Activated naive CD4-positive, alpha-beta T cell treated with anti-CD3 and anti-CD28 coated beads, Interleukin-2, amount 10 ng/mL, durations not matched to agents 7 days and 5 days (primary cell): ENCODE measurements at regions of chr3 and their contacts with region 1.

Region 1: DNA sequence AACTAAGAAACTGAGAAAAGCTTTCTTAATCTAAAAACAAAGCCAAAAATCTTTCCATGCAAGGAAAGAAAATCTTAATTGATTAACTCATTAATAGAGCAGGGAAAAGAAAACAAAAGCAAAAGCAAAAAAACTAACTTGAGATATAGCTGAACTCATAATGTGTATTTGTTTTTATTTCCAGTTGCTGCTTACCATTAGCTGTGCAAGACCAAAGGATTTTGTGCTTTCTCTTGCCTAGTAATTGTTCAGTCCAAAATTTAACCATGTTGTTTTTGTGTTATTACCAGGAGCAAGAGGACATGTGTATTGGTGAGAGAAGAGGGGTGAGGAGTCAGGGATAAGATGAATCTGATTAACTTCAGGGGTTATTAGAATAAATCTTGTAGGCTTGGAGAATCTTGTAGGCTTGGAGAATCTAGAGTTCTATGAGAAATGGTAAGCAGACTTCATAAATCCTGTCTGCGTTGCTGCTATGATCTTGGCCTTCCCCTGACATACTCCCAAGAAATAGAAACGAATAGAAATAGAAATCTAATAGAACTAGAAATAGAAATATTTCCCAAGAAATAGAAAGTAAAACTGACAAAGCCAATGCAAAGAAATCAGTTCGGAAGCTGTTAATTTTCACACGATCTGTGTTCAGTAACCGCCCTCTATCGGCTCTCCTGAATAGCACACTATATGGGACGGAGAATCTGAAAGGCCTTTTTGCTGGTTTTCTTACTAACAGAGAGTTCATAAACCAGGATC is 72.6 kb upstream of the TNFSF10 start:
- DNase-seq: peak; percentile 51
- H3K4me3 Mint-ChIP-seq: peak overlapping the region; percentile 69
- H3K27ac Mint-ChIP-seq: peak overlapping the region; percentile 51
- H3K4me1 Mint-ChIP-seq: peaks cover 56% of the 10 kb centered on the region
- H3K27me3 Mint-ChIP-seq: peaks cover 4% of the 10 kb centered on the region

Region 2: GRCh38 chr3:172305552-172305951 is 290.3 kb before region 1 on chr3:
- CTCF ChIA-PET with region 1: no interaction called
- DNase-seq: no peak
- H3K4me3 Mint-ChIP-seq: no peak overlapping the region
- H3K27ac Mint-ChIP-seq: no peak overlapping the region
- H3K4me1 Mint-ChIP-seq: no peaks in the 10 kb centered on the region
- H3K27me3 Mint-ChIP-seq: no peaks in the 10 kb centered on the region

Region 3: DNA sequence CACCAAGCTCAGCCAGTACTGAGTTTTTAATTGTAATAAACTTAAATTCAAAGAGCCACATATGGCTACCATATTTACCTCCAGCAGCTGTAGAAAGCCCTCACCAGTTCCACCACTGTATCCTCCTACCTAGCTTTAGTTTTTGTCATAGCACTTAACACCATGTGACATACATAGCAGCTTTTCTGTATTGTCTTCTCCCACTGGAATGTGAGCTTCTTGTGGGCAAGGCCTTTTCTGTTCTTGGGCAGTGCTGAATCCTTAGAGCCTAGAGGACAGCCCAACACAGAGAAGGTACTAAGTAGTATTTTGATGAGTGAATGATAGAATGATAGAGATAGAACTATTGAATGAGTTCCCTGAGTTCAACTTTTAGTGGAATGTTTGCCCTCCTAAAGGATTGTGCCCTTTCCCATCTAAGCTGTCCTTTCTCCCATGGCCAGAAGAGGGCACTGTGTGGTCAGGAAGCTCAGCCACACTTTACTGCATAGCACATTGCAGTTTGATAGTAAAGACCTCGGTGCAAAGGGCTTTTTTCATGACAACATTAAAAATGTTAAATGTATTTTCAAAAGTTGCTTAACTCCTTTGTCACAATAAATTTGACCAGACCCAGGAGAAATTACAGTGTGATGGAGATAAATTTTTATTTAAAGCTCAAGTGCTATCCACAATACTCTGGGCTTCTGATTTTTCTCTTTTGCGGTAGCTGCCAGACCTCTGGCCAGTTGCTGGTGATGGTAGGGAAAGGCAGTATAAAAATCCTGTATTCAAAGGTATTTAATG is 263.4 kb before region 1 on chr3:
- CTCF ChIA-PET with region 1: interaction called, 20 read pairs
- DNase-seq: peak; percentile 65
- H3K4me3 Mint-ChIP-seq: no peak overlapping the region
- H3K27ac Mint-ChIP-seq: peak overlapping the region; percentile 58
- H3K4me1 Mint-ChIP-seq: peaks cover 4% of the 10 kb centered on the region
- H3K27me3 Mint-ChIP-seq: no peaks in the 10 kb centered on the region

Region 4: DNA sequence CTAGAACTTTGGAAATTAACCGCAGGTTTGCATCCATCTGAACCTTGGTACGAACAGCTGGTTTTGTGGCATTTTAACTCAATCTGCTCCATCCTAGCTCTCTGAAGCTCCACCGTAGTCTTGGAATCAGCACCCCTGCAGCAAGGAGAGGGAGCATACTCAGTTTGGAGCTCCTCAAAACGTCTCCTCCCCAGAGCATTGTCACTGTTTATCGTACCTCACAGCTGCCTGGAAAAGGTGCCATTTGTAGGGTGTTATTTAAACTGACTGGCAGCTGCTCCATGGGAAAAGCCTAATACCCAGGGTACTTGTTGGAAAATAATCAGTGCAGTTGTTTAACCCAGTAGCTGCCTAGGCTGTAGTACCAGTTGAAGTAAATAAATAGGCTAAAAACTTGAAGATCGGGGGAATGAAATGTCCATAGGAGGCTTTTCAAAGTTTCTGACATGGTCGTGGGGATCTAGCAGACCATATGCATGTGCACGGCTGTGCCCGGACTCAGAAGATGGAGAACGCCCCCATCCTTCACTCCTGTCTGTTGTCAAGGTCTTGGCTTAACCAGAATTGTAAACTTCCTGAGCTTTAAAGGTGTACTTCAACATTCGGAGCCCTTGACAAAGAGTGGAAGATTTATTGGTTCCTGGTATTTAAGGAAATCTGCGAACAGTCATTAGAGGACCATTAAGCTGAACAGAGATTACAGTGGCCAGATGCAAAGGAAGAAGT is 191.4 kb before region 1 on chr3:
- CTCF ChIA-PET with region 1: no interaction called
- DNase-seq: no peak
- H3K4me3 Mint-ChIP-seq: no peak overlapping the region
- H3K27ac Mint-ChIP-seq: no peak overlapping the region
- H3K4me1 Mint-ChIP-seq: no peaks in the 10 kb centered on the region
- H3K27me3 Mint-ChIP-seq: peaks cover 7% of the 10 kb centered on the region

Region 5: GRCh38 chr3:172454180-172454579 is 141.6 kb before region 1 on chr3:
- CTCF ChIA-PET with region 1: no interaction called
- DNase-seq: no peak
- H3K4me3 Mint-ChIP-seq: no peak overlapping the region
- H3K27ac Mint-ChIP-seq: no peak overlapping the region
- H3K4me1 Mint-ChIP-seq: peaks cover 3% of the 10 kb centered on the region
- H3K27me3 Mint-ChIP-seq: peaks cover 32% of the 10 kb centered on the region

Region 6: GRCh38 chr3:172511783-172512762 is 83.7 kb before region 1 on chr3:
- CTCF ChIA-PET with region 1: interaction called, 180 read pairs
- DNase-seq: peak; percentile 75
- H3K4me3 Mint-ChIP-seq: peak overlapping the region; percentile 45
- H3K27ac Mint-ChIP-seq: peak overlapping the region; percentile 89
- H3K4me1 Mint-ChIP-seq: peaks cover 88% of the 10 kb centered on the region
- H3K27me3 Mint-ChIP-seq: no peaks in the 10 kb centered on the region

Region 7: DNA sequence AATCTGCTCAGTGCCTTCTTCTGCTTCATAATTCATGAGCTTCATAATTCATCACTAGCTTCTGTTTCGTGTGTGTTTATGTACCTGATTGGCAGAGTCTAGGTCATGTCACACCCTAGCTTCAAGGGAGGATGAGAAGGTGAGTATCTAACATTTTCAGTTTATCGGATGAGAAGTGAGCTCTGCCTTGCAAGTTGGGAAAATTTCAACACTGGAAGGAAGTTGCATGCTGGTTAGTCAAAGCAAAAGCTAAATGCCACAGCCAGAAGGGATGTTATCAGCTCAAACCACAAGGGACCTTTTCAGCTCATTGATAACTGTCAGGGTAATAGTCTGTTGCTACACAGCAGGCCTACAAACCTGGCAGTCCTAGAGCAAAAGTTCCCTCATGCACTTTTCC is 65.3 kb before region 1 on chr3:
- CTCF ChIA-PET with region 1: interaction called, 77 read pairs
- DNase-seq: peak; percentile 38
- H3K4me3 Mint-ChIP-seq: no peak overlapping the region
- H3K27ac Mint-ChIP-seq: peak overlapping the region; percentile 81
- H3K4me1 Mint-ChIP-seq: peaks cover 52% of the 10 kb centered on the region
- H3K27me3 Mint-ChIP-seq: no peaks in the 10 kb centered on the region

Region 8: DNA sequence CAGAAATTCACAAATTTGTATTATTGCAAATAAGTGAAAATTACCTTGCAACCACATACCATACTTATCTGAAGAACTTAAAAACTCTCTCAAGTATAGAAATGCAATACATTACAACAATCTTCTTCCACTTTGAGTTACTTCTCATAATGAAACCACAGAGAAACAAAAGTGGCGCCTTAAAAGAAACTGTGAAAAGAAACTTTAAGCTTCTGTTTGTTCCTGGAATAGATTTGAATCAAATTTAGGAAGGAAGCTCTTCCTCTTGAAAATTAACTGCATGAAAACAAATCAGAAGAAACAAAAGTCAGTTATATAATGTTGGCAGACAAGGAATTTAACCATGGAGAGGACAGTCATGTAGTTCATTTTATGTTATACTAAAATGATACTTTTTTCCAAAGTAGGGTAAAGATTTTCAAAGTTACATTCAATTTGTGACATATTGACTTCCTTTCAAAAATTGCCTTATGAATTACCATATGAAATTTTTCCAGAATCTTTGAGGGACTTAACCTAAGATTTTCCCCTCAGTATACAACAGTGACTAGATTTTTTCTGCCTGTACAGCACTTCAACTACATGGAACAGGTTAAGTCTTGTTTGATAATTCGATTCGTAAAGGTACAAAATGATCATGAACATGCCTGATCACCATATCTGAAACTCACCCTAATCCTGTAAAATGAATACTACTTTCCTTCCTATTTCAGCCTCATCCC is 15.0 kb before region 1 on chr3:
- CTCF ChIA-PET with region 1: interaction called, 29 read pairs
- DNase-seq: no peak
- H3K4me3 Mint-ChIP-seq: peak overlapping the region; percentile 61
- H3K27ac Mint-ChIP-seq: peak overlapping the region; percentile 94
- H3K4me1 Mint-ChIP-seq: peaks cover 96% of the 10 kb centered on the region
- H3K27me3 Mint-ChIP-seq: no peaks in the 10 kb centered on the region

Region 9: DNA sequence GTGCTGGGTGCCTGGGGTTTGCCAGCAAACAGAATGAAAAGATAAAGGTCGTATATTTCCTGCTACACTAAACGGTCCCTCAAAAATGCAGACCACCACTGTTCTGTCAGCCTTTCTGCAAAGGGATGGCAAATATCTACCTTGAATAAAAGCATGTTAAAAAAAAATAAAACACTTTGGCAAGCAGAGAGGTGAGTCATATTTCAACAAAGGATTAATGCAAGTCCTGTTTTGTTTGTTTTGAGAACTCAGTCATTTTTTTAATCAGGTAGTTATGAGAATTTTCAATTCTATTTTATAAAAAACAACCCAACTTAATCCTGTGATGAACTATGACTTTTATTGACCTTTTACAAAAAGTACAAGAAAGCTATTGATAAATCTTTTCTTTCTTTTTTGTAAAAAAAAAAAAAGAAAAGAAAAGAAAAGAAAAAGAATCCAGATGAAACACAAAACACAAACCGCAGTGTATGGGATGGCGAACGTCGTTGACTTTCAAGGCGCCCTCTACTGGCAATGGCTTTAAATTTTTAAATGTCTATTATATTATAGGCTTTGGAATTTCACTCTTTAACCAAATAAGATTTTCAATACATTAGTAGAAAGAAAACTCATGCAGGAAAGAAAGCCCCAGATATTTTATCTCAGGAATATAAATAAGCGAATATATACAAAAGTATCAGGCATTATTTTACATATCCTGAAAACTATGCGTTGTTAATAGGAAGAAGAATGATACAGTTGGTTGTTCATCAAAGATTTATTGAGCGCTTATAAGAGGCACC is 27.3 kb after region 1 on chr3:
- CTCF ChIA-PET with region 1: interaction called, 14 read pairs
- DNase-seq: peak; percentile 55
- H3K4me3 Mint-ChIP-seq: no peak overlapping the region
- H3K27ac Mint-ChIP-seq: no peak overlapping the region
- H3K4me1 Mint-ChIP-seq: peaks cover 7% of the 10 kb centered on the region
- H3K27me3 Mint-ChIP-seq: peaks cover 6% of the 10 kb centered on the region

Region 10: DNA sequence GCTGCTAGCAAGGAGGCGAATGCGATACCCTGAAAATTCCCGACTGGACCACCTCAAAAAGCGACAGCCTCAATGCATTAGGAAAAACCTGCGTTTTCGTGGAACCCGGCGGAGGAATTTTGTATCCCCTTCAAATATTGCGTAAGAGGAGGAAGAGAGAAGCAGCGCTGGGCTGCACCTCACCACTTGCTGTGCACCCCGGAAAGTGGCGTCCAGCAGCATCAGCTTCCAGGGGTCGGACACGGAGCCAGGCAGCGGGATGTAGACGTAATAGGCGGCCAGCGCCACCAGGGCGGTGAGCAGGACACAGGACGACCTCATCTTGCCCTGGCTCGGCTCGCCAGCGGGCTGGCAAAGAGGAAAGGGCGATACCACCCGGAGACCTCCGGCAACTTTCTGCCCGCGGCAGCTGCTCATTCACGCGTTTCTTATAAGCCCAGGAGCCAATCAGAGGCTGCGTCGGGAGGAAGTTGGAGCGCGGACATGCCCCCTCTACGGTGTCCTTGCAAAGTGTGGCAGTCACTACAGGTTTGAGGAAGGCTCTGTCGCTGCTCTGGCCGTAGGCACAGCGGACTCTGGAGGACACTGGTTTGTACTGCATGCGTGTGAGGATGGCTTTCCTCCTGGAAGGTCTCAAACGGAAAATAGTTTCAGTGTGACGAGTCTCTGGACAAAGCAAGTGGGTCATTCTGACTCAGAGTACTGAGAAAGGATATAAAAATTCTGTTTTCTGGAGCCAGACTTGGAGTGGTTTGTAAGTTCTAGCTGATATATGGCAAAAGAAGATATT is 115.0 kb after region 1 on chr3 and contains the start of gene NCEH1:
- CTCF ChIA-PET with region 1: no interaction called
- DNase-seq: peak; percentile 86
- H3K4me3 Mint-ChIP-seq: peak within 1 kb of the TSS; percentile 90
- H3K27ac Mint-ChIP-seq: peak within 1 kb of the TSS; percentile 64
- H3K4me1 Mint-ChIP-seq: peaks cover 16% of the 10 kb centered on the region
- H3K27me3 Mint-ChIP-seq: peaks cover 22% of the 10 kb centered on the region